ENCODE measurements at regions of chr6 and their contacts with region 1.

Region 1: GRCh38 chr6:111764238-111765175 is 108.7 kb downstream of the FYN start:
- DNase-seq: peak; percentile 58
- ATAC-seq: peak; percentile 37
- H3K4me3 Mint-ChIP-seq: peak overlapping the region; percentile 63
- H3K27ac Mint-ChIP-seq: peak overlapping the region; percentile 90
- H3K4me1 Mint-ChIP-seq: peaks cover 98% of the 10 kb centered on the region
- H3K27me3 Mint-ChIP-seq: no peaks in the 10 kb centered on the region

Region 2: DNA sequence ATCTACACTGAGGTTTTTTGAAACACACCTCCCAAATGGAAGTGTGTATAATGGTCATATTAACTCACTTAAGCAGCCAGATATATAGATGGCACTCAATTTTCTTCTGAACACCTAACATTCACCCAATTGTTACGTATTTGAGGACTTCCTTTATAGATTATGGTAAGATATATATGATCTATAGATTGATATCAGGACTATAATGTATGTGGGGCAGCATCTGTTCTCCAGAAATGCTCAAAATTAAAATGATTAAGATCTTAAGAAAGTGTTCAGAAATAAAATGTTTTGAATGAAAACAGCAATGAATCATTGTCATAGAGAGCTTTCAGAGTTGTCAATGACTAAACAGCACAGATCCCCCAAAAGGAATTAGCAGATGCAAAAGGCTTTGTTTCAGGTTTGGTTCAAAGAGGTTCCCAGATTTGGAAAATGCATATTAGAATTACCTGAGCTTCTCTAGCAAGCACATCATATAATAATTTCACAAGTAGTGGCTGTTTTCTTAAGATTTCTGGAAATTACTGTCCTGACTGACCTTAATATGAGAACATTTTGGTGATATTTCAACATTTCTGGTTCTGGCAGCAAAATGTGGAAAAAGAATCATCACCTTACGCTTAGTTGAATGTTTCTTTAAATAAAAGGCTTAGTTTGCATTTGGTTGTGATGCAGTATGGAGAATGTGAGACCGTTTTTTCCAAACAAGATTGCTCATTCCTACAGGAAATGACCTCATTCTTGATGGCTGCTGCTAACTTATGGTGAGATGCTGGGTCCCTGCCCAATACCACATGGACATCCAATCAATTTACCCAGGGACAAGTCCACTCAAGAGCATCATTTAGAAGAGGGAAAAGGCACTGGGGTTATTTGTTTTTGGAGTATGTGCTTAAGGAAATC is 190.4 kb before region 1 on chr6:
- CTCF ChIA-PET with region 1: no interaction called
- POLR2A ChIA-PET with region 1: no interaction called
- DNase-seq: no peak
- ATAC-seq: no peak
- H3K4me3 Mint-ChIP-seq: no peak overlapping the region
- H3K27ac Mint-ChIP-seq: no peak overlapping the region
- H3K4me1 Mint-ChIP-seq: peaks cover 21% of the 10 kb centered on the region
- H3K27me3 Mint-ChIP-seq: no peaks in the 10 kb centered on the region

Region 3: GRCh38 chr6:111683749-111684267 is 80.7 kb before region 1 on chr6:
- CTCF ChIA-PET with region 1: no interaction called
- POLR2A ChIA-PET with region 1: no interaction called
- DNase-seq: no peak
- ATAC-seq: no peak
- H3K4me3 Mint-ChIP-seq: no peak overlapping the region
- H3K27ac Mint-ChIP-seq: peak overlapping the region; percentile 53
- H3K4me1 Mint-ChIP-seq: peaks cover 21% of the 10 kb centered on the region
- H3K27me3 Mint-ChIP-seq: no peaks in the 10 kb centered on the region

Region 4: DNA sequence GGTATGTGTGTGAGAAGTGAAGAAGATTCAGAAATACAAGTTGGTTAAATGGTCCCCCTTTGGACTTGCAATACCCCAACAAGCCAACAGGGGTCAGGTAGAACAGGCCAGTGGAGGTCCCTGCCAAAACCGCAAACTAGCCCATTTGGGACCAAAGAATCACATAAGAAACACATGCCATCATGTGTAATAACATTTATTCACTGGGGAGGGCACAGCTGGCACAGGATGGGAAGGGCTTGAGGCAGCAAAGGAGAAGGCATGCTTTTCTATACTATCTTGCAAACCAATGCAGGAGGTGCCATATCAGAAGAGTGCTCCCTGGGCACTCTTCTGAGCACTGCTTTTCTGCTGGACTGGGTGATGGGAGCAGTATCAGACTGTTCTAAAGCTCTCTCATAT is 42.8 kb before region 1 on chr6:
- CTCF ChIA-PET with region 1: interaction called, 13 read pairs
- POLR2A ChIA-PET with region 1: no interaction called
- DNase-seq: peak; percentile 70
- ATAC-seq: peak; percentile 27
- H3K4me3 Mint-ChIP-seq: no peak overlapping the region
- H3K27ac Mint-ChIP-seq: peak overlapping the region; percentile 68
- H3K4me1 Mint-ChIP-seq: peaks cover 54% of the 10 kb centered on the region
- H3K27me3 Mint-ChIP-seq: no peaks in the 10 kb centered on the region

Region 5: GRCh38 chr6:111750753-111751684 is 13.5 kb before region 1 on chr6:
- CTCF ChIA-PET with region 1: interaction called, 22 read pairs
- POLR2A ChIA-PET with region 1: interaction called, 6 read pairs
- DNase-seq: peak; percentile 84
- ATAC-seq: peak; percentile 92
- H3K4me3 Mint-ChIP-seq: peak overlapping the region; percentile 63
- H3K27ac Mint-ChIP-seq: peak overlapping the region; percentile 93
- H3K4me1 Mint-ChIP-seq: peaks cover 92% of the 10 kb centered on the region
- H3K27me3 Mint-ChIP-seq: no peaks in the 10 kb centered on the region

Region 6: DNA sequence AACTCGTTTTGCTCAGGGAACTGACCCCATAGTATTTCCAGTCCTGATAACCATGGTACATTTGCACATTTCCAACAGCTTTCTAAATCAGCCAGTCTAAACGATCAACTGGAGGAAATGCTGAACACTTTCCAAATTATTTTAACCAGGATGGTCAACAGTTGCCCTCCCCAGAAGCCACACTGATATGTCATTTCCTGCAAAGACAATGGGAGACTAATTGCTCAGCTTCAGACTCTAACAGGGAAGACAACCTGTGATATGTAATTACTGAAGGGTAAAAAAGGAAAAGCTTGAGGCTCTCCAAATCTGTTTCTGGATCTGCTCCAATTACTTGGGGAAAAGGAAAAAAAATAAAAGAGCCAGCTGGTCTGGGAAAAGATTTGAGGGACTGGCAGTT is 19.9 kb after region 1 on chr6:
- CTCF ChIA-PET with region 1: interaction called, 11 read pairs
- POLR2A ChIA-PET with region 1: interaction called, 3 read pairs
- DNase-seq: no peak
- ATAC-seq: no peak
- H3K4me3 Mint-ChIP-seq: no peak overlapping the region
- H3K27ac Mint-ChIP-seq: peak overlapping the region; percentile 35
- H3K4me1 Mint-ChIP-seq: peaks cover 58% of the 10 kb centered on the region
- H3K27me3 Mint-ChIP-seq: no peaks in the 10 kb centered on the region

Region 7: DNA sequence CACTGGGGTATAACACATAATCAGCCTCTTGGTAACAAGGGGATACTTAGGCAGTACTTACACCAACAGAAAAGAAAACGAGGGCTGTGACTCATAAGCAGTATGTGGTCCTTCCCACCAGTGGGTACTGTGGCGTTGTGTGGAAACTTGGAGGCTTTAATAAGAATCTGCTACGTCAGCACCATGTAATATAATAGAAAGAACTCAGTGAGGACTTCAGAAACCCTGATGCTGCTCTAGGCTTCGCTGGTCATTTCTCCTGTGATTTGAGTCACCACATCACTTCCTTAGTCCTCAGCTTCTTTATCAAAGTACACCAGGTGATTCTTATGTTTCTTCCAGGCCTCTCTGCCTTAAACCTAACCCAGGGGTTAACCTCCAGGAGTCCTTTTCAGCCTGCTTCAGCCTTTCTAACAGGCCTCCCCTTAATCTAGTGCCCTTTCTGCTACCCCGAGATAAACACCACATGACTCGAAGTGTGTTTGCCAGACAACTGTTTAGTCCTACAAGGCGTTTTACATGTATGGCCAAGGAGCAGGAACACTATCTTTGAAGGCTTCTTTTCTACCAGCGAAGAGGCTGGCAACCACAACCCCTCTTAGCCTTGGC is 40.2 kb after region 1 on chr6:
- CTCF ChIA-PET with region 1: interaction called, 11 read pairs
- POLR2A ChIA-PET with region 1: interaction called, 8 read pairs
- DNase-seq: peak; percentile 89
- ATAC-seq: peak; percentile 78
- H3K4me3 Mint-ChIP-seq: peak overlapping the region; percentile 56
- H3K27ac Mint-ChIP-seq: peak overlapping the region; percentile 99
- H3K4me1 Mint-ChIP-seq: peaks cover 90% of the 10 kb centered on the region
- H3K27me3 Mint-ChIP-seq: no peaks in the 10 kb centered on the region

Region 8: GRCh38 chr6:111817451-111818120 is 53.1 kb after region 1 on chr6:
- CTCF ChIA-PET with region 1: no interaction called
- POLR2A ChIA-PET with region 1: no interaction called
- DNase-seq: no peak
- ATAC-seq: no peak
- H3K4me3 Mint-ChIP-seq: no peak overlapping the region
- H3K27ac Mint-ChIP-seq: peak overlapping the region; percentile 45
- H3K4me1 Mint-ChIP-seq: peaks cover 66% of the 10 kb centered on the region
- H3K27me3 Mint-ChIP-seq: no peaks in the 10 kb centered on the region

Measured in activated CD8-positive, alpha-beta T cell treated with anti-CD3 and anti-CD28 coated beads, Interleukin-2, amount 10 ng/mL, durations not matched to agents 7 days and 5 days (primary cell).